ENCODE measurements at regions of chr2 and their contacts with region 1.

Region 1: GRCh38 chr2:4882421-4882820 is 809.8 kb upstream of the SOX11 start:
- DNase-seq: no peak
- H3K4me3 ChIP-seq: no peak overlapping the region
- H3K27ac ChIP-seq: no peak overlapping the region
- H3K4me1 ChIP-seq: no peaks in the 10 kb centered on the region
- H3K27me3 ChIP-seq: no peaks in the 10 kb centered on the region
- CTCF ChIP-seq: no peak
- POLR2A ChIP-seq: no peak

Region 2: GRCh38 chr2:4144731-4145130 is 737.7 kb before region 1 on chr2:
- intact Hi-C with region 1: no loop called
- DNase-seq: no peak
- H3K4me3 ChIP-seq: no peak overlapping the region
- H3K27ac ChIP-seq: no peak overlapping the region
- H3K4me1 ChIP-seq: no peaks in the 10 kb centered on the region
- H3K27me3 ChIP-seq: no peaks in the 10 kb centered on the region
- CTCF ChIP-seq: no peak
- POLR2A ChIP-seq: no peak

Region 3: DNA sequence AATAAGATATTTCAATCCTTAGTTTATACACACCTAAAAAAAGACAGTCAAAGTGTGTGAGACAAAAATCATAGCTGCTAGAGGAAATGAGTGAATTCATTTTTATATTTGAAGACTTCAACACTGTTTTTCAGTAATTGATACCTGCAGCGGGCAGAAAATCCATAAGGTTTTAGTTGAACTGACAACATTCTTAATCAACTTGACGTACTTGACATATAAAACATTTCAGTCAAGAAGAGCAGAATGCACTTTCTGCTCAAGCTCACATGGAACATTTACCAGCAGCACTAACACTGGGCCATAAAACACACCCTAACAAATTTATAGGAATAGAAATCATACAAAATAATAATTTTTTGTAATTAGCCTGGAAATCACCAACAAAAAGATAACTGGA is 149.9 kb before region 1 on chr2:
- intact Hi-C with region 1: loop called (anchors 5 kb)
- DNase-seq: no peak
- H3K4me3 ChIP-seq: no peak overlapping the region
- H3K27ac ChIP-seq: no peak overlapping the region
- H3K4me1 ChIP-seq: no peaks in the 10 kb centered on the region
- H3K27me3 ChIP-seq: no peaks in the 10 kb centered on the region
- CTCF ChIP-seq: no peak
- POLR2A ChIP-seq: no peak

Region 4: DNA sequence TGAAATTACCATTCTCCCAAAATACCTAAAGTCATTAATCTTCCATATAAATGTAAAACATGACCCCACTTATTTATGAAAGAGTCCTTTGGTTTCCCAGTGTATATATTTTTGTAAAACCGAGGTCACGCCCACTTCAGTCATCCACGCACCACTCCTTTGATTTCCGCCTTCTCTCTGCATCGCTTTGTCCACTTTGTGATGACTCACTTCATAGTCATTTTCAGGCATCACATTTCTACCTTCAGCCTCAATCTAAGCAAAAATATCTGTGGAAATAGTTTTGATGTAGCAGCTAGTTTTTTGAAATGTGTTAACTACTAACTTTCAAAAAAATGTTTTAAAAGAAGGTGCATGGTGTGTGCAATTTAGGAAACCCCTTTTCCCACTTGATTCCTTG is 16.3 kb after region 1 on chr2:
- intact Hi-C with region 1: no loop called
- DNase-seq: no peak
- H3K4me3 ChIP-seq: no peak overlapping the region
- H3K27ac ChIP-seq: no peak overlapping the region
- H3K4me1 ChIP-seq: no peaks in the 10 kb centered on the region
- H3K27me3 ChIP-seq: no peaks in the 10 kb centered on the region
- CTCF ChIP-seq: no peak
- POLR2A ChIP-seq: no peak

Measured in breast epithelium (tissue), 4 donors.